CD14-positive monocyte (primary cell): ENCODE measurements at regions of chr9 and their contacts with region 1.

Region 1: GRCh38 chr9:36102742-36103495 is 33.6 kb upstream of the GLIPR2 start:
- DNase-seq: peak; percentile 79 to 87 (median 83)
- H3K4me3 ChIP-seq: no peak overlapping the region
- H3K4me3 Mint-ChIP-seq: no peak overlapping the region
- H3K27ac ChIP-seq: peak overlapping the region in 1 of 2 donors; percentile 2
- H3K27ac Mint-ChIP-seq: peak overlapping the region in 5 of 7 donors; percentile 23 to 64 (median 55)
- H3K4me1 ChIP-seq: peaks cover 7% of the 10 kb centered on the region in 2 donors
- H3K4me1 Mint-ChIP-seq: peaks cover 8% of the 10 kb centered on the region
- H3K27me3 ChIP-seq: no peaks in the 10 kb centered on the region
- H3K27me3 Mint-ChIP-seq: peaks cover 0 to 3% (median 2%) of the 10 kb centered on the region in 3 donors
- CTCF ChIP-seq: peak; percentile 90

Region 2: GRCh38 chr9:36151316-36152210 is 48.6 kb after region 1 on chr9:
- intact Hi-C with region 1: loop called in 1 of 2 experiments (anchors 5 kb)
- DNase-seq: peak; percentile 94 to 97 (median 97)
- H3K4me3 ChIP-seq: peak overlapping the region in 2 of 3 experiments; percentile 19 to 52
- H3K4me3 Mint-ChIP-seq: peak overlapping the region; percentile 62 to 87
- H3K27ac ChIP-seq: peak overlapping the region; percentile 97 to 99
- H3K27ac Mint-ChIP-seq: peak overlapping the region; percentile 98 to 100 (median 100)
- H3K4me1 ChIP-seq: peaks cover 91 to 92% of the 10 kb centered on the region in 2 donors
- H3K4me1 Mint-ChIP-seq: peaks cover 82% of the 10 kb centered on the region
- H3K27me3 ChIP-seq: no peaks in the 10 kb centered on the region
- H3K27me3 Mint-ChIP-seq: peaks cover 0 to 2% (median 0%) of the 10 kb centered on the region in 3 donors
- CTCF ChIP-seq: no peak

Region 3: DNA sequence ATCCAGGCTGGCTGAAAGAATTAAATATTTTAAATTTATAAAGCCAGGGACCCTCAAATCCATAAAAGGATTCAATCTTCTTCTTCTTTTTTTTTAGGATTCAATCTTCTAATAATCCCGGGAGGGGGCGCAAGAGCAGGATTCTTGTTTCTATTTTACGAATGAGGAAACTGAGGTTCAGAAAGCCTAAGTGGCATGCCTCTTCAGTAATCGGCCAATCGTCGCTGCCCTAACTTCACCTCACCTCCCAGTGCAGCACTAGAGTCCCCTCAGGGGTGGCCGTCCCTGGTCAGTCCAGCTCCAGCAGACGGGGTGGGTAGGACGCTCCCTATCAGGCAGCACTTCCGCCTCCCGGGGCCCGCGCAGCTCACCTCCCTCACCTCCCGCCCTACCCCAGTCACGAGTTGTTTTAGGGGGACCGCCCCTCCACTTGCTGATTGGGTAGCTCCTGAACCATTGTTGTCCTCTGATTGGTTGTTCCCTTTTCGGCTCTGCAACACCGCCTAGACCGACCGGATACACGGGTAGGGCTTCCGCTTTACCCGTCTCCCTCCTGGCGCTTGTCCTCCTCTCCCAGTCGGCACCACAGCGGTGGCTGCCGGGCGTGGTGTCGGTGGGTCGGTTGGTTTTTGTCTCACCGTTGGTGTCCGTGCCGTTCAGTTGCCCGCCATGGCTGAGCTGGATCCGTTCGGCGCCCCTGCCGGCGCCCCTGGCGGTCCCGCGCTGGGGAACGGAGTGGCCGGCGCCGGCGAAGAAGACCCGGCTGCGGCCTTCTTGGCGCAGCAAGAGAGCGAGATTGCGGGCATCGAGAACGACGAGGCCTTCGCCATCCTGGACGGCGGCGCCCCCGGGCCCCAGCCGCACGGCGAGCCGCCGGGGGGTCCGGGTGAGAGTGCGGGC is 87.7 kb after region 1 on chr9 and contains the start of gene CLTA:
- intact Hi-C with region 1: no loop called
- DNase-seq: peak; percentile 97 to 99 (median 99)
- H3K4me3 ChIP-seq: peak within 1 kb of the TSS; percentile 79 to 85 (median 84)
- H3K4me3 Mint-ChIP-seq: peak within 1 kb of the TSS; percentile 95 to 97
- H3K27ac ChIP-seq: peak within 1 kb of the TSS; percentile 86 to 92
- H3K27ac Mint-ChIP-seq: peak within 1 kb of the TSS; percentile 92 to 99 (median 95)
- H3K4me1 ChIP-seq: peaks cover 31 to 40% of the 10 kb centered on the region in 2 donors
- H3K4me1 Mint-ChIP-seq: peaks cover 39% of the 10 kb centered on the region
- H3K27me3 ChIP-seq: no peaks in the 10 kb centered on the region
- H3K27me3 Mint-ChIP-seq: peaks cover 5 to 8% (median 7%) of the 10 kb centered on the region in 3 donors
- CTCF ChIP-seq: peak; percentile 79
- polyA plus RNA-seq, gene CLTA: 85.6 to 262 (median 225) TPM